ENCODE measurements at regions of chr11 and their contacts with region 1.

Region 1: GRCh38 chr11:61429691-61430582 is at the starts of genes CPSF7 and SDHAF2:
- DNase-seq: peak; percentile 89
- ATAC-seq: peak; percentile 94
- H3K4me3 ChIP-seq: peak within 1 kb of the TSS; percentile 78 to 99 (median 84)
- H3K27ac ChIP-seq: peak within 1 kb of the TSS; percentile 100
- H3K4me1 ChIP-seq: peaks cover 62% of the 10 kb centered on the region
- H3K27me3 ChIP-seq: no peaks in the 10 kb centered on the region; a peak in 2 of 5 replicates
- CTCF ChIP-seq: no peak
- EP300 ChIP-seq: no peak
- POLR2A ChIP-seq: peak; percentile 76 to 84
- RAD21 ChIP-seq: no peak
- total RNA-seq, gene CPSF7: 29.4 and 34.1 TPM in 2 replicates
- total RNA-seq, gene SDHAF2: 44.2 and 53.3 TPM in 2 replicates

Region 2: GRCh38 chr11:61403658-61404057 is 26.3 kb before region 1 on chr11:
- CTCF ChIA-PET with region 1: no interaction called
- POLR2A ChIA-PET with region 1: interaction called, 21 read pairs
- in situ Hi-C with region 1: no loop called
- intact Hi-C with region 1: no loop called
- DNase-seq: no peak
- ATAC-seq: no peak
- H3K4me3 ChIP-seq: no peak overlapping the region
- H3K27ac ChIP-seq: no peak overlapping the region
- H3K4me1 ChIP-seq: no peaks in the 10 kb centered on the region
- H3K27me3 ChIP-seq: no peaks in the 10 kb centered on the region
- CTCF ChIP-seq: no peak
- EP300 ChIP-seq: no peak
- POLR2A ChIP-seq: no peak
- RAD21 ChIP-seq: no peak

Region 3: DNA sequence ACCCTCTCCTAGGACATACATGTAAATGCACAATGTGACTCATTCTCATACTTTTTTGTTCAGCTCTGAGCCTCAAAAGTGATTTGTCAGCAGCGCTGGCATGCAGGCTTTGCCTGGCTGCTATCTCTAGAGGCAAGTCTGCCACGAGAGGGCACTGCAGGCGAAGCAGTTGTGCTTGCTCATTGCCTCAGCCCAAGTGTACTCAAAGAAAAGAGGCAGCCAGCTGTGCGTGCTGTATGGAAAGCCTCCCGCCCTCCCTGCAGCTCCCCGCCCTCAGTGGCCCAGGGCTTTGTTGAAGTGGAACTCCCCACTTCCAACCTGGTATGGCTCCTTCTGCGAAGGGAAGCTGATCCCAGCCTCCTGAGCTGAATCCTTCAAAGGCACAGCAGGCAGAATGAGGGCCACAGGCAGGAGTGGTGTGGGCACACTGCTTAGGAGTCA is 16.3 kb after region 1 on chr11:
- CTCF ChIA-PET with region 1: no interaction called
- POLR2A ChIA-PET with region 1: interaction called, 17 read pairs
- in situ Hi-C with region 1: no loop called
- intact Hi-C with region 1: loop called (anchors 2 kb)
- DNase-seq: peak; percentile 78
- ATAC-seq: peak; percentile 97
- H3K4me3 ChIP-seq: no peak overlapping the region
- H3K27ac ChIP-seq: no peak overlapping the region
- H3K4me1 ChIP-seq: peaks cover 9% of the 10 kb centered on the region; the same call in 1 of the 2 replicates
- H3K27me3 ChIP-seq: no peaks in the 10 kb centered on the region
- CTCF ChIP-seq: peak; percentile 95
- EP300 ChIP-seq: no peak
- POLR2A ChIP-seq: no peak
- RAD21 ChIP-seq: peak; percentile 78

Measured in HepG2 (cell line).